Spleen (tissue), 13 donors: ENCODE measurements at regions of chr4 and their contacts with region 1.

Region 1: GRCh38 chr4:182925298-182925738 is 8.1 kb upstream of the DCTD start:
- DNase-seq: peak; percentile 91
- H3K4me3 ChIP-seq: no peak overlapping the region
- H3K27ac ChIP-seq: no peak overlapping the region
- H3K4me1 ChIP-seq: peaks cover 0 to 4% (median 0%) of the 10 kb centered on the region in 6 donors
- H3K27me3 ChIP-seq: peaks cover 0 to 4% (median 0%) of the 10 kb centered on the region in 7 donors
- CTCF ChIP-seq: peak; percentile 59 to 82 (median 72)
- POLR2A ChIP-seq: no peak

Region 2: DNA sequence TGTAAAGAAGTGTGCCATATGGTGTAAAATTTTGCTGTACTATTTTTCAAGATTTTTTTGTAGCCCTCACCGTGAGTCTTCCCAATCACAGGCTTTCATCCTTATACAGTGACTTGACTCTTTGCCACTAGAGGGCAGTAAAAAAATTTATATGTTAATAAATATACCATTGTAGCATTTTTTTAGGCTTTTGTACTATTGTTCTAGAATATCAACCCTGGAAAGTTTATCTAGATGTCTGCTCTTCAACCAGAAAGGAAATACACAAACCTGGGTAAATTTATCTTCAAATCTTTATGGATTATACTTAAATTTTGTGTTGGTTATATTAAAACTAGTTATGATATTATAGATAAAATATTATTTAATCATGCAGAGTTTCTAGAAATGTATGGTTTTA is 446.8 kb before region 1 on chr4:
- intact Hi-C with region 1: loop called (anchors 5 kb)
- DNase-seq: no peak
- H3K4me3 ChIP-seq: no peak overlapping the region
- H3K27ac ChIP-seq: no peak overlapping the region
- H3K4me1 ChIP-seq: no peaks in the 10 kb centered on the region
- H3K27me3 ChIP-seq: peaks cover 0 to 5% (median 0%) of the 10 kb centered on the region in 7 donors
- CTCF ChIP-seq: peak in 9 of 11 experiments; percentile 22 to 73 (median 60)
- POLR2A ChIP-seq: no peak

Region 3: GRCh38 chr4:182642831-182643230 is 282.5 kb before region 1 on chr4:
- intact Hi-C with region 1: no loop called
- DNase-seq: no peak
- H3K4me3 ChIP-seq: no peak overlapping the region
- H3K27ac ChIP-seq: no peak overlapping the region
- H3K4me1 ChIP-seq: no peaks in the 10 kb centered on the region
- H3K27me3 ChIP-seq: peaks cover 0 to 7% (median 0%) of the 10 kb centered on the region in 7 donors
- CTCF ChIP-seq: peak in 1 of 11 experiments; percentile 6
- POLR2A ChIP-seq: no peak

Region 4: GRCh38 chr4:182788201-182788600 is 137.1 kb before region 1 on chr4:
- intact Hi-C with region 1: no loop called
- DNase-seq: no peak
- H3K4me3 ChIP-seq: no peak overlapping the region
- H3K27ac ChIP-seq: no peak overlapping the region
- H3K4me1 ChIP-seq: no peaks in the 10 kb centered on the region
- H3K27me3 ChIP-seq: peaks cover 0 to 5% (median 0%) of the 10 kb centered on the region in 7 donors
- CTCF ChIP-seq: no peak
- POLR2A ChIP-seq: no peak

Region 5: GRCh38 chr4:182806259-182807252 is 118.8 kb before region 1 on chr4:
- intact Hi-C with region 1: loop called (anchors 10 kb)
- DNase-seq: peak; percentile 87
- H3K4me3 ChIP-seq: peak overlapping the region; percentile 23 to 69 (median 42)
- H3K27ac ChIP-seq: peak overlapping the region in 7 of 8 donors; percentile 37 to 75 (median 51)
- H3K4me1 ChIP-seq: peaks cover 0 to 25% (median 14%) of the 10 kb centered on the region in 6 donors
- H3K27me3 ChIP-seq: peaks cover 0 to 22% (median 0%) of the 10 kb centered on the region in 7 donors
- CTCF ChIP-seq: peak; percentile 21 to 84 (median 69)
- POLR2A ChIP-seq: no peak

Region 6: DNA sequence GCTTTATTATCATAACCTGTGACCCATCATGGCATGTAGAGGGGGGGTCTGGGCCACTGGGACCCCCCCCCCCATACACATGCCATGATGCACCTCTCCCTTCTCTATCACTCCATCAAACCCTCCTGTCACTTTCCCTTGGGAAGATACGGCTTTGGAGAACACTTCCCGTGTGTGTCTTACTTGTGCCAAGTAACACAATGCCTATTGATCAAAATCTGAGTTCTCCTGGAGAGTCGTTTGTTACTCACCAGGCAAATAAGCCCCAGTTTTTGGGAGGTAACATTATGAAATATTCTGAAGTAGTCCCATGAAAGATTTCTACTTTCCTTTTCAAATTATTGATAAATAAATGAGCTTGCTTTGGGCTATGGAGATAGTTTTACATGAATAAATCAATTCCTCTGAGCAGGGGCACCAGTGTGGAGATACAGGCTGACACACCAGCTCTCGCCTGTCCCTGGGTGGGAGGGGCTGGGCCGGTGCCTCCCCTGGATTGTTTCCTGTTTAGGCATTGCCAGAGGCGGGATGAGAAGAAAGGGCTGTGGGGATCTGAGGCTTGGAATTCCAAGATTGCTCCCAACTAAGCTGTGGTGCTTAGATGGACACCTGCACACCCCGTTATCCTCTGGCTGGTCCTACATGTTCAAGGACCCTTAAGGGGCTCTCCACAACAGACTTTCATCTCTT is 110.6 kb after region 1 on chr4:
- intact Hi-C with region 1: no loop called
- DNase-seq: no peak
- H3K4me3 ChIP-seq: no peak overlapping the region
- H3K27ac ChIP-seq: no peak overlapping the region
- H3K4me1 ChIP-seq: no peaks in the 10 kb centered on the region
- H3K27me3 ChIP-seq: no peaks in the 10 kb centered on the region
- CTCF ChIP-seq: no peak
- POLR2A ChIP-seq: no peak

Region 7: DNA sequence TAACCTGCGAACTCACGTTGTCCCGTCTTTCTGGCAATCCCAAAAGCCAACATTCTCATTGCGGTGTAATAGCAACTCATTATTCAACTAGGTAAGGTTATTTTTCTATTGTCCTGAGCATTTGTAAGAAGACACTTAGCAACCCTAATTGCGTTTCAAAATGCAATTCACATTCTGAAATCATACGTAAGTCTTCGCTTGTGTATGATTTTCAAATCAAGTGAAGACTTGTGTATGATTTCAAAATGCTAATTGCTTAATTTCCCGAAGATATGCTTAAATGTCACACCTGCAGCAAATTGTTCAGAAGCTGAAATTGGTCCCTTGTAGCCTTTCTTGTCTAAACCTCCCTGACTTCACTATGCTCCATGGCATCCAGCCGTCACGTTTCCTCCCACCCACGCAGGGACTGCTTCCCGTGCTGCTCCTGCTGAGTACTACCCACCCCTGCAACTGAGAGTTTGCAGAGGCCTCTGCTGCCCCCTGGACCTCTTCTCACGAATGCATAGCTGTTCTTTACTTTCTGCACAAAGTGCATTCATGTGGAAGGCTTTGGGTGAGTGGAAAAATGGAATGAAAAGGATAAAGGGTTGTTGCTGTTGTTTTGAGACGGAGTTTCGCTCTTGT is 437.7 kb after region 1 on chr4:
- intact Hi-C with region 1: no loop called
- DNase-seq: peak; percentile 24
- H3K4me3 ChIP-seq: no peak overlapping the region
- H3K27ac ChIP-seq: no peak overlapping the region
- H3K4me1 ChIP-seq: no peaks in the 10 kb centered on the region
- H3K27me3 ChIP-seq: peaks cover 0 to 7% (median 0%) of the 10 kb centered on the region in 7 donors
- CTCF ChIP-seq: no peak
- POLR2A ChIP-seq: no peak